ENCODE measurements at regions of chr1 and their contacts with region 1.

Region 1: DNA sequence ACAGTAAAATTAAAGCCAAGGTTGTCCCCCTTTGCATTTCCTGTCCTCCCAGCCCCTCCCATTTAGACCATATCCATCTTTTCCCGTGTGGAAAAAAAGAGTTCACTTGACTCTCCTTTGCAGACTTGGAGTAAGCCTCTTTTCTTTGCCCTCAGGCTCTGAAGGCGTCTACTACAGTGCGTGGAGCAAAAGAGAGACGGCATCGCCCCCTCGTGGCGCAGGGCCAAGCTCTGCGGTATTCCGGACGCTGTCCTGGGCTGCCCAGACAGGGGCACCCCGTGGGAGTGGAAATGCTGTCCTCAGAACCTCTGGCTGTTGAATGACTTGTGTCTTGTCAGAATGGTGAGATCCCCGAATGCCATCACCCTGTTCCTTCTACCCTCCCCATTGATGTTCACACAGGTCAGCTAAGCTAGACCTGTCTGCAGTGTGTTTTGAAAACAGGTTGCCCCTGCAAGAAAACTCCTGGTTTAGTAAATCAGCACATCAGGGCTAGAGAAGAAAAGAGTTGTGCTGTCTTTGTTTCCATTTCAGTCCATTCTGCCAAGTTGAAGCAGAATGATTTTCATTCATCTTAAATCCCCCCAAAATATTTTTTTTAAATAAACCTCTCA is 12.3 kb upstream of the GJA8 start:
- DNase-seq: peak in 1 of 2 donors; percentile 81
- H3K4me3 ChIP-seq: no peak overlapping the region
- H3K27ac ChIP-seq: no peak overlapping the region
- H3K4me1 ChIP-seq: peaks cover 0 to 4% of the 10 kb centered on the region in 2 donors
- H3K27me3 ChIP-seq: no peaks in the 10 kb centered on the region
- CTCF ChIP-seq: peak; percentile 56 to 76 (median 57)

Region 2: DNA sequence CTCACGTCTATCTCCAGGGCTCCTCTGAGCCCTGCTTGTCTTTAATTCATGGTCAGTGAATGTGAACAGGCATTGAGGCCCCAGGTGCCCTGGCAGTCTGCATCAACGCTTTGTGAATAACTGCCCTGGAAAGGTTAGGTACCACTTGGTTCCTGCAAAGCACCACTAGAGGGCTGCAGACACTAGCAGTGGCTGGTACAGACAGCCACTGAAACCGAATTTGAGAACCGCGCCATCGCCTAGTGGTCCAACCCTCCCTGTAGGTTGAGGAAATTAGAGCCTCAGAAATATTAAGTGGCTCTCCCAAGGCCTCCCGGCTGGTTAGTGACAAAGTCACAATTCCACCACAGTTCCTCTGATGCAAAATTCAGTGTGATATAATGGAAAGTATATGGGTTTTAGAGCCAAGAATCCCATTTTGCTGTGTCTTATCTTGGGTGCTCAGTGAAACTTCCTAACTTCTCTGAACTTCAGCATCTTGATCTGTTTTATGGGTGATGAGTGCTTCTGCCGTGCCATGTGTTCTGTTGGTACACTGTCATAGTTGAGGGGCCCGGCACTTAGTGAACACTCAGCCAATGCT is 395.2 kb before region 1 on chr1:
- intact Hi-C with region 1: loop called (anchors 2 kb)
- DNase-seq: peak; percentile 19 to 86
- H3K4me3 ChIP-seq: no peak overlapping the region
- H3K27ac ChIP-seq: no peak overlapping the region
- H3K4me1 ChIP-seq: no peaks in the 10 kb centered on the region
- H3K27me3 ChIP-seq: no peaks in the 10 kb centered on the region
- CTCF ChIP-seq: peak; percentile 76 to 93 (median 86)

Region 3: GRCh38 chr1:147640553-147641165 is 249.6 kb before region 1 on chr1:
- intact Hi-C with region 1: loop called (anchors 2 kb)
- DNase-seq: peak in 1 of 2 donors; percentile 71
- H3K4me3 ChIP-seq: no peak overlapping the region
- H3K27ac ChIP-seq: no peak overlapping the region
- H3K4me1 ChIP-seq: no peaks in the 10 kb centered on the region
- H3K27me3 ChIP-seq: no peaks in the 10 kb centered on the region
- CTCF ChIP-seq: peak; percentile 16 to 58 (median 57)

Region 4: DNA sequence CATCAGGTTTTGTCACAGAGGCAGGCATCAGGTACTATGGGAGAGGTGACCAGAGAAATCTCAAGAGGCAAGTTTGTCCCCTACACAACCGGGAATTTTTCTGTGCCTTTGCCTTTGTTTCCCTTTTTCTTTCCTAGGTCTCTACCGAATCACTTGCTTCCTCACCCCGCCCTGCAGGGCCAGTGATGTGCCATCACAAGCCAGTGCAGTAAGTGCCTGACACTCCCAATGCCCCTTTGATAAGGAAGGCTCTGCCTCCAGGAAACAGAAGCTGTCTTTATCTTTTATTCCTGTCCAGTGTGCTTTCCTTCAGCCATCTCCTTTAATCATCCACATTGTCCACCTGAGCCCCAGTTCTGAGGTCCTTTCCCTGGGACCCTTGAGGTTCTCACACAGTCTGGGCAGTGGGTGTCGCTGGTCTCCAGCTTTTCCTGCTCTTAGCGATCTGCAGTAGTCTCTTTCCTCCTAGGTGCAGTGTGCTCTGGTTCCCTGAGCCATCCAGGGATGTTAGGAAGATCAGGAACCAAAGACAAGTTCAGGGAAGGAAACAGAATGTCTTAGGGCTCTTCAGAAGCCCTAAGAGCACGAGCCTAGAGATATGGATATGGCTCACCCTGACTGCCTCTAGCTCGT is 166.5 kb before region 1 on chr1:
- intact Hi-C with region 1: loop called (anchors 1 kb)
- DNase-seq: no peak
- H3K4me3 ChIP-seq: no peak overlapping the region
- H3K27ac ChIP-seq: no peak overlapping the region
- H3K4me1 ChIP-seq: no peaks in the 10 kb centered on the region
- H3K27me3 ChIP-seq: no peaks in the 10 kb centered on the region
- CTCF ChIP-seq: peak; percentile 74 to 84 (median 76)

Region 5: DNA sequence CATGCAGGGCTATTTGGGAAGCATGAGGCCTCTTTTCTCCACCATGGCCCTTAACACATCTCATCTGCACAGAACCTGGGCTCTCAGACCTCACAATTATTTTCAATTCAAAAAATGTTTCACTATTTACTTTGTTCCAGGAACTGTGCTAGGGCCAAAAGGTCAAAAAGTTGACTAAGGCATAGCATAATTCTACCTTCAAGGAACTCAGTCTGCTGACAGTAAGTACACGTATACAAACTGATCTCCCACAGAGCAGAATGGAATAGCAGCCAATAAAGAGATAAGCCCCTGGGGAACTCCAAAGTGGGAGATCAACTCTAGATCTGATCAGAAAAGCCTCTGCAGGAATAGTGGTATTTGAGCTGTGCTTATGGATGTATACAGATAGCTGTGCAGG is 21.3 kb before region 1 on chr1:
- intact Hi-C with region 1: no loop called
- DNase-seq: no peak
- H3K4me3 ChIP-seq: no peak overlapping the region
- H3K27ac ChIP-seq: no peak overlapping the region
- H3K4me1 ChIP-seq: no peaks in the 10 kb centered on the region
- H3K27me3 ChIP-seq: no peaks in the 10 kb centered on the region
- CTCF ChIP-seq: no peak